ENCODE measurements at regions of chr6 and their contacts with region 1.

Region 1: DNA sequence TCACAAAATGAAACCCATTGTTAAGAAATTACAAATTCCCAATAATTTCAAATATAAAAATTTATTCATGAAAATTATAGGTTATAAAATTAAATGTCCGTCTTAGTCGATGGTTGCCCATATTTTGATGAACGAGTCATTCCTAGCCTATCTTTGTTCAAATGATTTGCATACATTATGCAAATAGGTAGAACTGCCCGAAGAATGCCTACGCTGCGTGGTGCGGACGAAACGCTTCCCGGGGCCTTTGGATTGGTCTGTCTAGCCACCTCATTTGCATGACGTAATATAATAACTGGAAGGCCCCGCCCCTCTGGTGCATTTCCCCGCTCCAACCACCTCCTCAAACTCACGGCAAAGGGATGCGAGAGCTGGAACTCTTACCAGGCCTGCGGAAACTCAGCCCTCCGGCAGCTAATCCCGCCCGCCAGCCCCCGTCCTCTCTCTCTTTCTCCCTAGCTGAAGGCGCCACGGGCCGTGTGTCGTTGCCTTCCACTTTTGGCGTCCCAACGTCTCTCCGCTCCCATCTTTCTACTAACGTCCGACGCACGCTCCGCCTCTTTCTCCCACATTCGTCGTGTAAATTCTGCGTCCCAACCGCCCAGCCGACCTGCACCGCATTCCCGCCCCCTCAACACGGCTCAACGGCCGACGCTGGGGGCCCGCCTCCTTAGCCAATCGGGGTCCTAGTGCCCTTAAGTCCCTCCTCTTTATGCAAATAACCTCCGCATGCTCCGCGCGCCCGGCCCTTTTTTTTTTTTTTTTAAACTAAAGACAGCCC is 520 bp upstream of the PRRC2A start:
- DNase-seq: peak; percentile 97 to 98
- H3K4me3 ChIP-seq: peak overlapping the region; percentile 66
- H3K4me3 Mint-ChIP-seq: peak overlapping the region; percentile 83
- H3K27ac Mint-ChIP-seq: peak overlapping the region; percentile 92
- H3K4me1 ChIP-seq: peaks cover 20% of the 10 kb centered on the region
- H3K4me1 Mint-ChIP-seq: peaks cover 19% of the 10 kb centered on the region
- H3K27me3 ChIP-seq: no peaks in the 10 kb centered on the region
- H3K27me3 Mint-ChIP-seq: no peaks in the 10 kb centered on the region
- CTCF ChIP-seq: no peak

Region 2: GRCh38 chr6:31665501-31666336 is 45.7 kb after region 1 on chr6 and contains the start of gene CSNK2B:
- CTCF ChIA-PET with region 1: no interaction called
- POLR2A ChIA-PET with region 1: interaction called, 3 read pairs
- intact Hi-C with region 1: loop called (anchors 1 kb)
- DNase-seq: peak; percentile 97 to 98
- H3K4me3 ChIP-seq: peak within 1 kb of the TSS; percentile 90
- H3K4me3 Mint-ChIP-seq: peak within 1 kb of the TSS; percentile 86
- H3K27ac Mint-ChIP-seq: peak within 1 kb of the TSS; percentile 96
- H3K4me1 ChIP-seq: peaks cover 17% of the 10 kb centered on the region
- H3K4me1 Mint-ChIP-seq: peaks cover 25% of the 10 kb centered on the region
- H3K27me3 ChIP-seq: no peaks in the 10 kb centered on the region
- H3K27me3 Mint-ChIP-seq: no peaks in the 10 kb centered on the region
- CTCF ChIP-seq: no peak
- total RNA-seq, gene CSNK2B: 219 and 221 TPM in 2 replicates

Region 3: DNA sequence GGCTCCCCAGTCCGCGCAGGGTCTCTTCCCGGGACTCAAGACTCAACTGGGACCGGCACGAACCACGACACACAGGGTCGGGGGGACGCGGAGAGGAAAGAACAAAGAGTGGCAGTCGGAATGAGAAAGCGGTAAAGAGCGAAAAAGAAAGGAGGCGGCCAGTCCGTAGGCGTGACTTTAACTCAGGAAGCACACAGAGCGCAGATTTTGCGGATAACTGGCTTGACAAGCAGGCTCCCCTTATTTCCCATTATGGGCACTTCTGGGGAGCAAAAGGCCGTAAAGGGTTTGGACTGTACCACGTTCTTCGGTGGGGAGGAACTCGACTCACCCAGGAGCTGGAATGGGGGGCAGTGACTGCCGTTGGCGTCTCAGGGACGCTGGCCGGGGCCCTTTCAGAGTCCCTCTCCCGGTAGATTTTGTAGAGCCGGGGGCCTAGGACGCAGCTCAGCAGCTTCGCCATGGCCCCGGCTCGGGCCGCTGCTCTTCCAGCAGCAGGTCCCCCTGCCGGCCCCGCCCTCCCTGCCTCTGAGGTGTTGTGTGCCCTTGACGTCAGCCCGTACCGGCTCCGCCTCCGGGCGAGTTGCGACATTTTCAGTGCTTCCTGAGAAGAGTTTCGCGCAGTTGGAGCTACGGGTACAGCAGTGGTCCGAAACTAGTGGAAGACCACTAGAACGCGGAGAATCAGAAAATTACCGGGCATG is 83.0 kb after region 1 on chr6 and contains the start of gene ABHD16A:
- CTCF ChIA-PET with region 1: no interaction called
- POLR2A ChIA-PET with region 1: no interaction called
- intact Hi-C with region 1: no loop called
- DNase-seq: peak; percentile 97 to 98
- H3K4me3 ChIP-seq: peak within 1 kb of the TSS; percentile 50
- H3K4me3 Mint-ChIP-seq: peak within 1 kb of the TSS; percentile 91
- H3K27ac Mint-ChIP-seq: peak within 1 kb of the TSS; percentile 87
- H3K4me1 ChIP-seq: peaks cover 34% of the 10 kb centered on the region
- H3K4me1 Mint-ChIP-seq: peaks cover 11% of the 10 kb centered on the region
- H3K27me3 ChIP-seq: no peaks in the 10 kb centered on the region
- H3K27me3 Mint-ChIP-seq: no peaks in the 10 kb centered on the region
- CTCF ChIP-seq: no peak
- total RNA-seq, gene ABHD16A: 62.7 and 63.2 TPM in 2 replicates